Activated T-helper 1 cell treated with anti-CD3 and anti-CD28 coated beads, Interleukin-12 subunit alpha, Interleukin-12 subunit beta, Interleukin-2, Interleukin-4 antibody, amounts not matched to agents 30 ng/mL and 10 ng/mL and 1 ng/mL, durations not matched to agents 14 hours and 24 hours and 36 hours (primary cell): ENCODE measurements at regions of chr3 and their contacts with region 1.

Region 1: DNA sequence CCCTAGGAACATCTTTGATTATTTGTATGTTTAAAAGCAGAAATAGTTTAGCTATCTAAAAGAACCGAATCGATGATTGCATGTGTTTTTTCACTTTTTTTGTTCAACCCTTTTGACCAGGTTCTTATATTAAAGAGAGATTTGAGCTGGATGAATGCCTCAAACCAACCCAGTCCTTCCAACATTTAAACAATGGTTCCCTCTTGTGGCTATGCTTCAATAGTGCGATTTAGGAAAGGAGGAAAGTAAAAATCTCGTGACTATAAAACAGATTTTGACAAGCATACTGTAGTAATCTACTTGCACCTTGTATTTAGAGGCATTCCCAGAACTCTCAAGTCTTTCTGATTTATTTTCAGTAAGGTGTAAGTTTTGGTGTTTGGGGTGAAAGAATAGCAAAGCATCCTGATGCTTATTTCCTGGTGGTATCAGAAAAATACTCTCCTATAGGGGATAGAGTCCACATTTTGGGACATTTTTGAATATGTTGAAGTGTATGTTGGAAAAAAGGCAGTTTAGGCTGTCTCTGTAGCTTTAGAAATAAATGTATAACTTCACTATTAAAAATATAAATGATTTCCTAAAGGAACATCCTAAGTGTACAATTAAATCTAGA is 159.6 kb upstream of the KCNH8 start:
- DNase-seq: no peak
- H3K4me3 Mint-ChIP-seq: peak overlapping the region; percentile 85
- H3K27ac Mint-ChIP-seq: peak overlapping the region; percentile 46
- H3K4me1 Mint-ChIP-seq: peaks cover 25% of the 10 kb centered on the region
- H3K27me3 Mint-ChIP-seq: peaks cover 12% of the 10 kb centered on the region

Region 2: DNA sequence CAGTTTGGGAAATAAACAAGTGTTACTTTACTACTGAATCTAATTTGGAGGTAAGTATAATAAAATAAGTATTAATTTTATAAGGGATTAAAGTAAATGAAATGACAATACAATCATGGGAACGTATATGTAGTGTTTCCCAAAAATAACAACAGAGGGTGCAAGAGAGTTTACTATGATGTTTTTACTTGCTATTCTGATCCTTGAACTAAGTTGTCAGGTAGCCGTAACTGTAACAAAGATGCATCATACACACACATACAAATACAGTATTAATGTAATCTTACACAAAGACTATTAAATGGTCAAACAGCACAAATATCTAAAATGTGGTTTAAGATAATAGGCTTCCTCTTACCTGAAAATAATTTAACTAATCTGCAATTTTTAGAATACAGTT is 1557.7 kb before region 1 on chr3:
- intact Hi-C with region 1: loop called (anchors 1 kb)
- DNase-seq: no peak
- H3K4me3 Mint-ChIP-seq: no peak overlapping the region
- H3K27ac Mint-ChIP-seq: no peak overlapping the region
- H3K4me1 Mint-ChIP-seq: no peaks in the 10 kb centered on the region
- H3K27me3 Mint-ChIP-seq: no peaks in the 10 kb centered on the region

Region 3: DNA sequence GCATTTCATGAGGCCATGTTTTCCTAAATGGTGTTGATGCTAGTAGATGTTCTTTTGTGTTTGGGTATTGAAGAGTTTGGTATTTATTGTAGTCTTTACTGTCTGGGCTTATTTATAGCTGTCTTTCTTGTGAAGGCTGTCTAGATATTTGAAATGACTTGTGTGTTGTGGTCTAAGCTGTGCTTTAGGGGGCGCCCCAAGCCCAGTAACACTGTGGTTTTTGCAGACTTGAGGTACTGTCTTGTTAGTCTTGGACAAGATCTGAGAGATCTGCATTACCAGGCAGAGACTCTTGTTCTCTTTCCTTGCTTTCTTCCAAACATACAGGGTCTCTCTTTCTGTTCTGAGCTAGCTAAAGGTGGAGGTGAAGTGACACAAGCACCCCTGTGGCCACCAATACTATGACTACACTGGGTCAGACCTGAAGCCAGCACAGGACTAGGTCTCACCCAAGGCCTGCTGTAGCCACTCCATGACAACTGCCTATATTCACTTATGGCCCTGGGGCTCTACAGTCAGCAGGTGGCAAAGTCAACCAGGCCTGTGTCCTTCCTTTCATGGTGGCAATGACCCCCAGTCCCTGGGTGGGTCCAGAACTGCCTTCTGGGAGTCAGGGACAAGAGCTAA is 1094.2 kb before region 1 on chr3:
- intact Hi-C with region 1: loop called (anchors 1 kb)
- DNase-seq: no peak
- H3K4me3 Mint-ChIP-seq: no peak overlapping the region
- H3K27ac Mint-ChIP-seq: no peak overlapping the region
- H3K4me1 Mint-ChIP-seq: no peaks in the 10 kb centered on the region
- H3K27me3 Mint-ChIP-seq: peaks cover 2% of the 10 kb centered on the region

Region 4: DNA sequence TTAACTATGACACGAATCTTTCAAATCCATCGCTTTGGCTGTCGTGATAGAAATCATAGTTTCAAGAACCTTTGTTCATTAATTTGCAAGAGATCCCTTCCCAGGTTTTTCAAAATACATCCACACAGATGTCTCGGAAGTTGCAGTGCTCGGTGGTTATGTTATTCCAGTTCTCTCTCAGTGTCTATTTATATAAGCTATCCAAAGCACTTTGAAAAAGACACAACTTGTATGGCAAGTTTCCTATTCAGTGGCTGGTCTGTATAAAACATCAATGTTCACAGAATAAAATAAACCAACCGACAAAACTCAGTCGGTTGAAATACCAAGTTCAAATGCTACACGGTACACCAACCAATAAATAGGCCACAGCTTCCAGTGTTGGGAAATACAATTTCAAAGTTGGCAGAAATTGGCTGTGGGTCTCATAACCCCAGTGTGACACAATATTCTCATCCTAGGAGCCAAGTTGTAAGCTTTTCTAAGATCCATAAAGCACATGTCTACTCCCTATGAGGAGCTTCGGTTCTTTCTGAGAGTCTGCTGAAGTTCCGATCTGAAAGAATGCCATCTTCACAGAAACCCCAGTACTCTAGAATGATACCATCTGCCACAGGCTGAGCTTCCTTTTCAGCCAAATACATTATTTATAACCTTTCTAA is 587.3 kb before region 1 on chr3:
- intact Hi-C with region 1: loop called (anchors 5 kb)
- DNase-seq: no peak
- H3K4me3 Mint-ChIP-seq: peak overlapping the region; percentile 73
- H3K27ac Mint-ChIP-seq: peak overlapping the region; percentile 83
- H3K4me1 Mint-ChIP-seq: peaks cover 100% of the 10 kb centered on the region
- H3K27me3 Mint-ChIP-seq: no peaks in the 10 kb centered on the region

Region 5: DNA sequence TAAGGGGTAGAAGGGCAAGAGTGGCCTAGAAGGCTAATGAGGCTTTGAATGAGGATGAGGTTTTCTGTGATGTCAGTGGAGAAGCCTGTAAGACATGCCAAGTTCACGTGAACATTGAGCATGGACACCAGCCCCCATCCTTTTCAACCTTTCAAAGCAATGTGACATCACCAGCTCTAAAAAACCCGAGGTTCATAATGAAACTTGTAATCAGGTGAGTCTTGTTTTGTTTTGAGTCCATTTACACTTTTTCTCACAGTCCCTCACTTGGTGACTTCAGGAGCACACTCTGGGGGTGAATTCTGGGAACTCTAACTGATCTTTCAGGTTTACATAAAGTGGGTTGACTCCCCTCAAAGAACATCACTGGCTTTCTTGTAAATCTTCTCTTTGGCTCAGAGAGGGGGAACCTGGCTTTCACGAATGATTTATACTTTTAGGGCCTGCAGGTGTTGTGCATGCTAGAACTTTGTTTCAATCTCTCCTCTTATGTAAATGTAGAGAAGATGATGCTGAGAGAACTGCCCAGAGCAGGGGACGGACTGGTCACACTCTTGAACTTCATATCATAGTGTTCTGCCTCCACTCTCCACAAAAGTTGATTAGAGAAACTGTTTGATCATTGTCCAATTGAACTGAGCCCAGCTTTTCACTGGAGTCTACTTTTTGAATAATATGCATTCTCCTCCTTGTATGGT is 338.9 kb before region 1 on chr3:
- intact Hi-C with region 1: loop called (anchors 5 kb)
- DNase-seq: peak; percentile 70
- H3K4me3 Mint-ChIP-seq: peak overlapping the region; percentile 59
- H3K27ac Mint-ChIP-seq: peak overlapping the region; percentile 94
- H3K4me1 Mint-ChIP-seq: peaks cover 94% of the 10 kb centered on the region
- H3K27me3 Mint-ChIP-seq: no peaks in the 10 kb centered on the region

Region 6: DNA sequence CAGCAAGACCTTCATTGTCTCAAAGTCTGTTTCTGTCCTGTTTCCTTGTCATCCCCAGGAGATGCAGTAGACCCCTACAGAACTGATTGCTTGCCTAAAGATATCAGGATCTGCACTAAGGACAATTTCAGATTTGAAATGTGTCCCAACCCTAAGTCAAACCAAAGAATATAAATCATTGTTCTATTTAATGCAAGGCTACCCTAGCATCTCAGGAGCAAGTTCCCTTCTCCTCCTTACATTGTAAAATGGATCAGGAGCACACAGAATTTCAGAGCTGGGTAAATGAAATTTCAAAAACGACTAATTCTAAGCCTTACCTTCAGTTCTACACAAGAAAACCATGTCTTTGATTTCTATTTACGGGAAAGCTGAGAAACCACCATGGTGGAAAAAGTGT is 201.3 kb before region 1 on chr3:
- intact Hi-C with region 1: loop called (anchors 2 kb)
- DNase-seq: no peak
- H3K4me3 Mint-ChIP-seq: no peak overlapping the region
- H3K27ac Mint-ChIP-seq: no peak overlapping the region
- H3K4me1 Mint-ChIP-seq: peaks cover 8% of the 10 kb centered on the region
- H3K27me3 Mint-ChIP-seq: peaks cover 3% of the 10 kb centered on the region

Region 7: DNA sequence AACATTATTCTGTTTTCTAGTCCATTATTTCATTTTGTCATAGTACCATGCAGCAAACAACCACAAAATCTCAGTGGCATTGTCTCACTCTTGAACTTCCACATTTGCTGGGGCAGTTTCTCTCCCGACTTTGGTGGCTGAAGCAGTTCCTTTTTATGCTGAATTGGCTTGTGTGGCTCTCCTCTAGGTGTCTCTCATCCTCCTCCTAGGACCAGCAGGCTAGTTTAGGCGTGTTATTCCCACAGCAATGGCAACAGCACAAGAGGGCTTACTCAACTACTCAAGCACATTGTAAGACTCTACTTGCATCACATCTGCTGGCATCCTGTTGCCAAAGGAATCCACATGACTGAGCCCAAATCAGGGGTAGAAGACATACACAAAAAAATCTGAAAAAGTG is 42.2 kb before region 1 on chr3:
- intact Hi-C with region 1: no loop called
- DNase-seq: no peak
- H3K4me3 Mint-ChIP-seq: no peak overlapping the region
- H3K27ac Mint-ChIP-seq: no peak overlapping the region
- H3K4me1 Mint-ChIP-seq: no peaks in the 10 kb centered on the region
- H3K27me3 Mint-ChIP-seq: peaks cover 2% of the 10 kb centered on the region